Dendritic cell treated with granulocyte-macrophage colony-stimulating factor and Interleukin-4, amounts not matched to agents 40 ng/mL and 50 ng/mL, for 4 days (primary cell): ENCODE measurements at regions of chr2 and their contacts with region 1.

Region 1: DNA sequence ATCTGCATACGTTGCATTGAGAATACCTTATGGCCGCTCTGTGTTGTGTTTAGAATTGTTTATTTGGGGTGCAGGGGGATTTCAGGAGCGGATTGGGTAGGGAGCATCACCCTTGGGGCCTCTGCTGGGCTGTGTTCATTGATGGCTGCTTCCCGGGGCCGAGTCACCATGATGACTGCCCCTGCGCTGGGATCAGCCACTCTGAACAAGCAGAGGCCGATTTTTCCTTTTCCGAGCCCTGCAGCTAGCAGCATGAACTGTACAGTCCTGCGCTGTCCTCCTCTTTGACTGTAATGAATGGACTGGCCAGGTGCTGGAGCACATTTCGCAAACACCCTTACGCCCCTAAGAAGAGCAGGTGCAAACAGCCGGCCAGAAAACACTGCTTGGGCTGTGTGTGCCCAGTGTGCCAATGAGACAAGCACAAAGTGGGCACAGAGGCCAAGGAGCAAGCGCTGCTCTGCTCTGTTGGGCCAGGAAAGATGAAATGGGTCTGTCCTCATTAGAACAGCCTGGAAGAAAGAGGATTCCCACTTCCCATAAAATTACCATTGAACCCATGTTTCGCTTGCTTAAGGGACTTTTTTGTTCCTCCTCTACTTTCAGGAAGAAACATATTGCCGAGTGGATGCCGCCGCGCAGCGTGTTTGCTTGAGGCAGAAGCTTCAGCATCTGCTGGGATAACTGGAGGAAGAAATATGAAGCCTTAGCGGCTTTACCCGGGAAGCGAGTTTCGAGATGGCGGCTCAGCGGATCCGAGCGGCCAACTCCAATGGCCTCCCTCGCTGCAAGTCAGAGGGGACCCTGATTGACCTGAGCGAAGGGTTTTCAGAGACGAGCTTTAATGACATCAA is 82.7 kb downstream of the SH3BP4 start:
- H3K4me3 Mint-ChIP-seq: no peak overlapping the region
- H3K27ac Mint-ChIP-seq: peak overlapping the region; percentile 23
- H3K4me1 Mint-ChIP-seq: peaks cover 9% of the 10 kb centered on the region
- H3K27me3 Mint-ChIP-seq: peaks cover 5% of the 10 kb centered on the region

Region 2: DNA sequence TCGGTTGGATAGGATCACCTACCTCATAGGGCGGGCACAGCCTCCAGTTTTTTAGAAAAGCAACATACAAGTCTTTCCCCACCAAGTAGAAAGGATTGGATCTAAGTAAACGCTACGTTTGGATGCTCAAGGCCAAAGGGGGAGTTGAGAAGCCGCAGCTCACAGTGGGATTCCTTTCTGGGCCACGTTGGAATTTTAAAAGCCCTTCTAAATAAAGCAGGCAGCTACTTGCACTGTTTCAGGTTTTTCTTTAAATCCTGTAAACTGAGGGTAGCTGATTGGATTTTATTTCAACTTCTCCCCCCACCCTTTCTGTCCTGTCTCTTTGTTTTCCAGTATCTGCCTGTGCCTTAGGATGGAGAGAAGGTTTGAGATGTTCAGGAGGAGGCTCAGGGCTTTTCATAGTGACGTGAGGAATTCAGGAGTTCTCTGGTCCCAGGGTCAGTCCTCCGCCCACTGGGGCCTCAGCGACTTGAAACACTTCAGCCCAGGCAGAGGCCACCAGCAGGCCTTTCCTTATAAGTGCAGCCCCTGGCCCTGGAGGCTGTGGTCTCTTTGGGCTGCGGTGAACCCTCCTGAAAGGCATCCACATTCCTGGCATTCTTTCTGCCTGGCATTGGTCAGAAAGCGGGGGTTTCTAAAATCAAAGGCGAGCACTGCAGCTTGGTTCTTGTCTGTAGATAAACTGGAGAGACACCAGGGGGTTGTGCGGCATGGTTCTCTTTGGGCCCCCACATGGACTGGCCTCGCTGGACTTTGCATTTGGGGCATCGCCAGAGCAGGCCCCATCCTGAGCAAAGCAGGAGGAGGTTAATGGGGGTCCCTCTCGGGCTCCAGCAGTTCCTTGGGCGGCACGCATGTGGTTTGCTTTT is 38.2 kb before region 1 on chr2:
- intact Hi-C with region 1: loop called (anchors 5 kb)
- H3K4me3 Mint-ChIP-seq: no peak overlapping the region
- H3K27ac Mint-ChIP-seq: peak overlapping the region; percentile 67
- H3K4me1 Mint-ChIP-seq: peaks cover 62% of the 10 kb centered on the region
- H3K27me3 Mint-ChIP-seq: peaks cover 54% of the 10 kb centered on the region